Caco-2 (cell line): ENCODE measurements at regions of chr10 and their contacts with region 1.

Region 1: GRCh38 chr10:3852147-3852904 is 67.3 kb upstream of the KLF6 start:
- DNase-seq: peak; percentile 92 to 95
- H3K4me3 ChIP-seq: no peak overlapping the region
- H3K4me3 Mint-ChIP-seq: peak overlapping the region; percentile 67
- H3K27ac Mint-ChIP-seq: peak overlapping the region; percentile 98
- H3K4me1 ChIP-seq: peaks cover 51% of the 10 kb centered on the region
- H3K4me1 Mint-ChIP-seq: peaks cover 54% of the 10 kb centered on the region
- H3K27me3 ChIP-seq: no peaks in the 10 kb centered on the region
- H3K27me3 Mint-ChIP-seq: no peaks in the 10 kb centered on the region
- CTCF ChIP-seq: no peak

Region 2: GRCh38 chr10:3353235-3353634 is 499.1 kb before region 1 on chr10:
- CTCF ChIA-PET with region 1: no interaction called
- POLR2A ChIA-PET with region 1: no interaction called
- intact Hi-C with region 1: no loop called
- DNase-seq: no peak
- H3K4me3 ChIP-seq: no peak overlapping the region
- H3K4me3 Mint-ChIP-seq: no peak overlapping the region
- H3K27ac Mint-ChIP-seq: no peak overlapping the region
- H3K4me1 ChIP-seq: no peaks in the 10 kb centered on the region
- H3K4me1 Mint-ChIP-seq: no peaks in the 10 kb centered on the region
- H3K27me3 ChIP-seq: no peaks in the 10 kb centered on the region
- H3K27me3 Mint-ChIP-seq: peaks cover 3% of the 10 kb centered on the region
- CTCF ChIP-seq: no peak

Region 3: GRCh38 chr10:3754727-3755439 is 97.4 kb before region 1 on chr10:
- CTCF ChIA-PET with region 1: no interaction called
- POLR2A ChIA-PET with region 1: no interaction called
- intact Hi-C with region 1: loop called (anchors 1 kb)
- DNase-seq: peak; percentile 64 to 76
- H3K4me3 ChIP-seq: no peak overlapping the region
- H3K4me3 Mint-ChIP-seq: peak overlapping the region; percentile 60
- H3K27ac Mint-ChIP-seq: peak overlapping the region; percentile 91
- H3K4me1 ChIP-seq: peaks cover 64% of the 10 kb centered on the region
- H3K4me1 Mint-ChIP-seq: peaks cover 49% of the 10 kb centered on the region
- H3K27me3 ChIP-seq: no peaks in the 10 kb centered on the region
- H3K27me3 Mint-ChIP-seq: no peaks in the 10 kb centered on the region
- CTCF ChIP-seq: no peak

Region 4: DNA sequence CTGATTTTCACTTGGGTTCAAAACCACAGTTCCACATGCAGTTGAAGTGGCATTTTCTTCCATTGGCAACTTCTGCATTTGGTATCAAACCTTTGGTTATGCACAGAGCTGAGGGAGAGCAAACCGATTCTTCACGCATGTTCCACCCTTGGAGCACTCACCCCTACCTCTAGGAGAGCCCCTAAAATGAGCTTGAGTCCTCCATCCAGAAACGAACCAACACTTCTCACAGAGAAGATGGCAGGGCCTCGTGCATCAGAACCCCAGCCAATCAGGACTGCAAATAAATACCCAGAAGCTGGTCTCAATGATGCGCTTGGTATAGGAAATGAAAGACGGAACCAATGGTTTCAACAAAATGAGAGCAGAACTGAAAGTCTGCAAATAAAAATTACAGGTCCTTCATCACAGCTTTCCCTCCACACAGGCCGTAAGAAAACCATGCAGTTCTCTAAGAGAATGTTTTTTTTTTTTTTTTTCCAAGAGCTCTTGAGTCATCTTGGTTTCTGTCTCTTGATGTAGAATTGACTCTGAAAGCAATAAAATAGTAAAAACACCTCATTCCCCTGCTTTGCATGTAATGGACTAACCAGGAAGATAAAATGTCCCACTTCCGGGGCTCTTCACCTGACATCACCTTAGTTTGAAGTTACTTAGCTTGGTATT is 91.2 kb before region 1 on chr10:
- CTCF ChIA-PET with region 1: interaction called, 4 read pairs
- POLR2A ChIA-PET with region 1: interaction called, 3 read pairs
- intact Hi-C with region 1: loop called (anchors 1 kb)
- DNase-seq: no peak
- H3K4me3 ChIP-seq: no peak overlapping the region
- H3K4me3 Mint-ChIP-seq: peak overlapping the region; percentile 86
- H3K27ac Mint-ChIP-seq: peak overlapping the region; percentile 78
- H3K4me1 ChIP-seq: peaks cover 94% of the 10 kb centered on the region
- H3K4me1 Mint-ChIP-seq: peaks cover 80% of the 10 kb centered on the region
- H3K27me3 ChIP-seq: no peaks in the 10 kb centered on the region
- H3K27me3 Mint-ChIP-seq: no peaks in the 10 kb centered on the region
- CTCF ChIP-seq: no peak

Region 5: GRCh38 chr10:3805791-3806461 is 46.4 kb before region 1 on chr10:
- CTCF ChIA-PET with region 1: interaction called, 18 read pairs
- POLR2A ChIA-PET with region 1: interaction called, 22 read pairs
- intact Hi-C with region 1: loop called (anchors 1 kb)
- DNase-seq: peak; percentile 68 to 80
- H3K4me3 ChIP-seq: no peak overlapping the region
- H3K4me3 Mint-ChIP-seq: peak overlapping the region; percentile 58
- H3K27ac Mint-ChIP-seq: peak overlapping the region; percentile 84
- H3K4me1 ChIP-seq: peaks cover 80% of the 10 kb centered on the region
- H3K4me1 Mint-ChIP-seq: peaks cover 36% of the 10 kb centered on the region
- H3K27me3 ChIP-seq: no peaks in the 10 kb centered on the region
- H3K27me3 Mint-ChIP-seq: no peaks in the 10 kb centered on the region
- CTCF ChIP-seq: no peak

Region 6: DNA sequence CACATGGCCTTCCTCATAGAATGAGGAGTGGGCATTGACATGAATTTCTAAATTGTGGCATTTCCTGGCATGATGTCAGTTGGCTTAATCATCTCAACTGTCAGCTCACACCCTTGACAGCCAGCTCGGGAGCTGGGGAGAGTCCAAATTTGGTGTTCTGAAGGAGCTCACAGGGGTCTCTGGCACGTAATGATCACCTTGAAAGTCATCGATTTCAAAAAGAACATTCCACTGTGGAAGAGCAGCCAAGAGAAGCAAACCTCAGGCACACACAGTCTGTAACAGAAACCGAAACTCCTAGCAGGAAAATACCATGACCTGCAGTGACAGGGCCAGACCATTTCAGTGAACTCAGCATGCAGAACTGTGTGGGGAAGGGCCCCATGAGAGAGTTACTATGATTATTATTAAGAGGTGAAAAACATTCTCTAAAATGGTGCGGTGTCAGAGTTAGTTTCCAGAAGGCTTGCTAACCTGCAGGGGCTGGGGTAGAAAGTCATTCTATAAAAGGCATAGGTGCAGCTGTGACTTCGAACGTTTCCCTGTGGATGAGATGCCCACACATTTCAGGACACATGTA is 40.9 kb before region 1 on chr10:
- CTCF ChIA-PET with region 1: interaction called, 18 read pairs
- POLR2A ChIA-PET with region 1: interaction called, 22 read pairs
- intact Hi-C with region 1: loop called (anchors 1 kb)
- DNase-seq: no peak
- H3K4me3 ChIP-seq: no peak overlapping the region
- H3K4me3 Mint-ChIP-seq: peak overlapping the region; percentile 20
- H3K27ac Mint-ChIP-seq: peak overlapping the region; percentile 84
- H3K4me1 ChIP-seq: peaks cover 73% of the 10 kb centered on the region
- H3K4me1 Mint-ChIP-seq: peaks cover 67% of the 10 kb centered on the region
- H3K27me3 ChIP-seq: no peaks in the 10 kb centered on the region
- H3K27me3 Mint-ChIP-seq: no peaks in the 10 kb centered on the region
- CTCF ChIP-seq: no peak

Region 7: DNA sequence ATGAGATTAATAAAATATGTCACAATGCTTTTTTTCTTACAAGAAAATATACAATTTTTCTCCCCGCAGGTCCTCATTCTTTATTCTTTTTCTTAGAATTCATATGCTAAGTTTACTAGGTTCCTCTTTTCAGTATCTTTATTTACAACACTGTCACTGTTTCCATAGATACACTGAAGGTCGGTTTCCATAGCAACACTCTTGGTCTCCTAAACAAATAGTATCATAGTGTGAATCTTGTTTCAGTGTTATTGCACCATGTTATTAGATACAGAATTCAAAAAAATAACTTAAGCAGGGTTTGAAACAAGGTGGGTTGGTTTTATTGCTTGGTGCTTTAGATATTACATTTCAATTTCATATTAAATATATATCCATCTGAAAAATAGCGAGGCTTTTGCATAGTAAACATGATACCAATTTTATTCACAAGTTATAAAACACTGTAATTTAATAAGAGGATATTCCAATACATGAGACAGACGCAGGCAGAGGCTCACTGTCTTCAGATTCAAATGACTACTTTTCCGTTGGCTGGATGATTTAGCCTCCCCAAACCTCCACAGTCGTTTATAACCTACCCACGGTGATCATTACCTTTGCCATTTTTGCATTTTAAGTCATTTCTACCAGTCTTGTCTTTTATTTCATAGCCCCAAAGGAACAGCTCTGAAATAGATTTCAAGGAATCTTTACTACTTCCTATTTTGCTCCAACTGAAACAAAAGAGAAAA is 21.6 kb after region 1 on chr10:
- CTCF ChIA-PET with region 1: no interaction called
- POLR2A ChIA-PET with region 1: no interaction called
- intact Hi-C with region 1: loop called (anchors 2 kb)
- DNase-seq: peak in 1 of 2 experiments; percentile 51
- H3K4me3 ChIP-seq: no peak overlapping the region
- H3K4me3 Mint-ChIP-seq: no peak overlapping the region
- H3K27ac Mint-ChIP-seq: peak overlapping the region; percentile 75
- H3K4me1 ChIP-seq: peaks cover 24% of the 10 kb centered on the region
- H3K4me1 Mint-ChIP-seq: peaks cover 37% of the 10 kb centered on the region
- H3K27me3 ChIP-seq: no peaks in the 10 kb centered on the region
- H3K27me3 Mint-ChIP-seq: no peaks in the 10 kb centered on the region
- CTCF ChIP-seq: no peak

Region 8: DNA sequence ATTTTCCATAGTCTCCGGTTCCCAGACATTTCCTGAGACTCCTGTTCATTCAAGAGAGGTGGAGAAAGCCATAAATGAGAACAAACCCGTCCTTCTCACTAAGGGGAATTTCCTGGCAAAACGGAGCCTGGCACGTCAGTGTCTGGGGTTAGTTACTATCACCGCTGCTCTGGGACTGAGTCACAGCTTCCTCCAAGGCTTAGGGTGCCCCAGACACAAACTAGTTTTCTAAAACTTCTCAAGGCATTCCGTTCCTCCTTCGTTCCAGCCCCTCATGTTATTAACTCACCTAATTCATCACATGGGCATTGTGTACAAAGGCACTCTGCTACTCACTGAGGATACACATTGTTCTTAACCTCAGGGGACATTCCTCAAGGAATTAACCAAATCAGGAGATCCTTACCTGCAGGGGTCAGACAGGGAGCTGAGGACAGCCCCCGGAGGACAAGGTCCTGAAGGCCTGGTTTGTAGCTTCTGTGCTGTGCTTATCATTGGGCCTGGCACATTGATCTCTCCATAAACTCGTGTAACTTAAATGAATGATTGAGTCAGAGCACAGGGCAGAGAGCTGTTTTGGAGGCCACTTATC is 35.7 kb after region 1 on chr10:
- CTCF ChIA-PET with region 1: interaction called, 5 read pairs
- POLR2A ChIA-PET with region 1: interaction called, 11 read pairs
- intact Hi-C with region 1: loop called (anchors 1 kb)
- DNase-seq: peak; percentile 77 to 89
- H3K4me3 ChIP-seq: no peak overlapping the region
- H3K4me3 Mint-ChIP-seq: peak overlapping the region; percentile 63
- H3K27ac Mint-ChIP-seq: peak overlapping the region; percentile 96
- H3K4me1 ChIP-seq: peaks cover 70% of the 10 kb centered on the region
- H3K4me1 Mint-ChIP-seq: peaks cover 61% of the 10 kb centered on the region
- H3K27me3 ChIP-seq: no peaks in the 10 kb centered on the region
- H3K27me3 Mint-ChIP-seq: no peaks in the 10 kb centered on the region
- CTCF ChIP-seq: no peak

Region 9: GRCh38 chr10:3924344-3924743 is 72.0 kb after region 1 on chr10:
- CTCF ChIA-PET with region 1: no interaction called
- POLR2A ChIA-PET with region 1: no interaction called
- intact Hi-C with region 1: no loop called
- DNase-seq: no peak
- H3K4me3 ChIP-seq: no peak overlapping the region
- H3K4me3 Mint-ChIP-seq: no peak overlapping the region
- H3K27ac Mint-ChIP-seq: no peak overlapping the region
- H3K4me1 ChIP-seq: peaks cover 6% of the 10 kb centered on the region; the same call in 1 of the 2 replicates
- H3K4me1 Mint-ChIP-seq: no peaks in the 10 kb centered on the region
- H3K27me3 ChIP-seq: no peaks in the 10 kb centered on the region
- H3K27me3 Mint-ChIP-seq: no peaks in the 10 kb centered on the region
- CTCF ChIP-seq: no peak

Region 10: GRCh38 chr10:4111643-4112042 is 259.3 kb after region 1 on chr10:
- CTCF ChIA-PET with region 1: no interaction called
- POLR2A ChIA-PET with region 1: no interaction called
- intact Hi-C with region 1: no loop called
- DNase-seq: no peak
- H3K4me3 ChIP-seq: no peak overlapping the region
- H3K4me3 Mint-ChIP-seq: no peak overlapping the region
- H3K27ac Mint-ChIP-seq: no peak overlapping the region
- H3K4me1 ChIP-seq: no peaks in the 10 kb centered on the region
- H3K4me1 Mint-ChIP-seq: no peaks in the 10 kb centered on the region
- H3K27me3 ChIP-seq: no peaks in the 10 kb centered on the region
- H3K27me3 Mint-ChIP-seq: peaks cover 3% of the 10 kb centered on the region
- CTCF ChIP-seq: no peak